Endothelial cell of umbilical vein (primary cell): ENCODE measurements at regions of chr2 and their contacts with region 1.

Region 1: GRCh38 chr2:27582695-27583389 is at the start of gene ZNF512:
- DNase-seq: peak; percentile 89
- H3K4me3 ChIP-seq: peak within 1 kb of the TSS; percentile 51 to 98 (median 94)
- H3K27ac ChIP-seq: peak within 1 kb of the TSS; percentile 77
- H3K4me1 ChIP-seq: peaks cover 24% of the 10 kb centered on the region
- H3K27me3 ChIP-seq: no peaks in the 10 kb centered on the region
- CTCF ChIP-seq: peak in 1 of 2 donors; percentile 7
- POLR2A ChIP-seq: peak; percentile 91
- total RNA-seq, gene ZNF512: 28.0 and 37.0 TPM in 2 replicates

Region 2: DNA sequence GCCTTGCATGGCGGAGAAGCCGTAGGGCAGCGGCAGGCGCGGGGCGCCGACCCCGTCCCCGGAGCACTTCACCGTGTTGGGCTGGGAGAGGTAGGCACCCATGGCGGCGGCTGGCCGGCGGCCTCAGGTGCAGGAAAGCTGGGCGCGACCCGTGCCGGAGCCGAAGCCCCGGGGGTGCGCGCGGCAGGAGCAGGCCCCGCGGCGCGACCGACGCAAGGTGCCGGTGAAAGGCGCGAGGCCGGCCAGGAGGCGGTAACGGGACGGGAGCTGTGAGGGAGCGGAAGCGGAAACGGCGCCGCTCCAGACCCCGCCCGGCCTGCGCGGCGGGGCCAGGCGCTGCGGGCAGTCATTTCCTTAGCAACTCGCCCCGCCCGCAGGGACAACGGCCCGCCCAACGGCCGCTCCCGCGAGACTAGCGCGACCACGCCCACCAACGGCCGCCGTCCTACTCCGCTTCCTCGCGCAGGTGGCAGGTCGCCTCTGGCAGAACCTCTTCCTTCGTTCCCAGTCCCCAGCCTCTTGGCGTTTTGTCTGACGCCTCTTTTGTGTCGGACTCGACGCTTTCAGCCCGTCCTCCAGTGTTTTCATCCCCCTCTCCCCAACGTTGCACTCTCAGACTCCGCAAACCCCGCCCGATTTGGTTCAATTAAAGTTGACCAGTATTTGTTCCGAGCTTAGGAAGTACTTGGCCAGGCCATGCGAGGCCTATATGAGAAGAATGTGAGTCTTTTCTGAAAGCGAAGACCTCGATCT is 173.3 kb before region 1 on chr2 and contains the start of gene PPM1G:
- CTCF ChIA-PET with region 1: no interaction called
- POLR2A ChIA-PET with region 1: no interaction called
- dilution Hi-C with region 1: no loop called
- intact Hi-C with region 1: loop called (anchors 5 kb)
- DNase-seq: peak; percentile 97
- H3K4me3 ChIP-seq: peak within 1 kb of the TSS; percentile 71 to 90 (median 84)
- H3K27ac ChIP-seq: peak within 1 kb of the TSS; percentile 73
- H3K4me1 ChIP-seq: peaks cover 20% of the 10 kb centered on the region
- H3K27me3 ChIP-seq: peaks cover 1 to 5% of the 10 kb centered on the region in 2 experiments
- CTCF ChIP-seq: no peak
- POLR2A ChIP-seq: peak; percentile 98
- total RNA-seq, gene PPM1G: 131 and 135 TPM in 2 replicates

Region 3: DNA sequence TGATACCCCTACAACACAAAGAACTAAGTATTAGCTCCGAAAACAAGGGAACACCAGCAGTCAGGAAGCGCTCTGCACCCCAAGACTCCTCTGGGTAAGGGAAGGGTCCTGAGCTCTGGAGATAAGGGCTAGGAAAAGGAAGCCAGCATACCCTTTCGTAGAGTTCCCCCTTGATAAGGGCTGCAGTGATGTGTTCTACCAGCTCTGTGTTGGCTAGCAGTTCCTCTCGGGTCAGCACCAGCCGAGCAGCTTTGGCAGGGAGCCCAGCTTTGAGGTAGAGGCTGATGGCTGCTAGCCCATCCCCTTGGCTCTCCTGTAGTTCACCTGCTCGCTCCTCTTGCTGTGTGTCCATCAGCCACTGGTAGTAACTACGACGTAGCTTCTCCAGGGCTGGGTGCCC is 121.7 kb before region 1 on chr2:
- CTCF ChIA-PET with region 1: no interaction called
- POLR2A ChIA-PET with region 1: no interaction called
- dilution Hi-C with region 1: loop called (anchors 25 kb)
- intact Hi-C with region 1: no loop called
- DNase-seq: no peak
- H3K4me3 ChIP-seq: no peak overlapping the region
- H3K27ac ChIP-seq: no peak overlapping the region
- H3K4me1 ChIP-seq: no peaks in the 10 kb centered on the region
- H3K27me3 ChIP-seq: no peaks in the 10 kb centered on the region
- CTCF ChIP-seq: no peak
- POLR2A ChIP-seq: no peak

Region 4: DNA sequence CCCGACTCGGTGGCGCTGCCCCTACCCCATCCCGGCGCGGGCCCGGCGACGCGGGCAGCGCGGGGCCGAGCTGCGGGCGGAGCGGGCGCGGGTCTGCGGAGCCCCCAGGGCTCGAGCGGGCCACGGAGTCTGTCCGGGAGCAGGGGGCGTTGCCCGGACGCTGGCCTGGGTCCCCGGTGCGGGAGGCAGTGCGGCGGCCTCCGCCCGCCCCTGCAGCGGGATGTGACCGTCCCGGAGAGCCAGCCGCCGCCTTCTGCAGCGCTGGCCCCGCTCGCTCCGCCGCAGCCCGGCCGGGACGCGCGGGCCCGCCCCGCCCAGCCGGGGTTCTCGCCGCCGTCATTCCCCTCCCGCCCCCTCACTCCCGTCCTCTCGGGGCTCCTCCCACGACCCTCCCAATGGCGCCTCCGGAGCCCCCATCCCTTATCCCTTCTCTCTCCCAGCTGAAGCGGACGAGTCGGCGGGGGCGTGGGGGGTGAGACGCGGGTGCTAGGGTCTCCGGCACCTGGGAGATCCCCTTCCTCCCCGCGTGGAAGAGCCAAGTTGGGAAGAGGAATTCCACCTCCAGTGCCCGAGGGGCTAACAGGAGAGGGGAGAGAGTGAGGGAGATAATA is 87.8 kb before region 1 on chr2 and contains the start of gene FNDC4:
- CTCF ChIA-PET with region 1: no interaction called
- POLR2A ChIA-PET with region 1: no interaction called
- dilution Hi-C with region 1: no loop called
- intact Hi-C with region 1: loop called (anchors 1 kb)
- DNase-seq: peak; percentile 37
- H3K4me3 ChIP-seq: peak within 1 kb of the TSS; percentile 78 to 89 (median 85)
- H3K27ac ChIP-seq: peak within 1 kb of the TSS; percentile 8
- H3K4me1 ChIP-seq: peaks cover 18% of the 10 kb centered on the region
- H3K27me3 ChIP-seq: no peaks in the 10 kb centered on the region
- CTCF ChIP-seq: no peak
- POLR2A ChIP-seq: peak; percentile 73
- total RNA-seq, gene FNDC4: 15.5 and 20.0 TPM in 2 replicates

Region 5: DNA sequence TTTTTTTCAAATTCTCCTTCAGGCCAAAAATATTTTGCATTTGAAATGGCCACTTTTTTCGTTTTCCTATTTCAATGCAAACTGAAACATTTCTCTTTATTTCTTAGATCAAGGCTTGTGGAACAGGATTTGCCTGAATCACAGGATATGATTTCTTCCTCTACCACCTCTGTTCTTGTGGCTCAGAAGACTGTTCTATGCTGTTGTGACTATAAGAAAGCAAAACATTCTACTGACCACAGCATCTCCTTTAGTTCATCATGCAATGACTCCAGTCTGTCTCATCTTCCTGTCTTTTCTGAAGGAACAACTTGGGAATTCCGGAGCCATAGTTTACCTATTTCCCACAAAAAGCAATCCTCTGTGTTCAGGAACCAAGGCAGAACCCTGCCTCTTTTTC is 16.2 kb before region 1 on chr2:
- CTCF ChIA-PET with region 1: no interaction called
- POLR2A ChIA-PET with region 1: no interaction called
- dilution Hi-C with region 1: no loop called
- intact Hi-C with region 1: loop called (anchors 1 kb)
- DNase-seq: peak; percentile 82
- H3K4me3 ChIP-seq: peak overlapping the region in 1 of 3 experiments; percentile 1
- H3K27ac ChIP-seq: peak overlapping the region; percentile 81
- H3K4me1 ChIP-seq: peaks cover 30% of the 10 kb centered on the region
- H3K27me3 ChIP-seq: no peaks in the 10 kb centered on the region
- CTCF ChIP-seq: no peak
- POLR2A ChIP-seq: no peak

Region 6: DNA sequence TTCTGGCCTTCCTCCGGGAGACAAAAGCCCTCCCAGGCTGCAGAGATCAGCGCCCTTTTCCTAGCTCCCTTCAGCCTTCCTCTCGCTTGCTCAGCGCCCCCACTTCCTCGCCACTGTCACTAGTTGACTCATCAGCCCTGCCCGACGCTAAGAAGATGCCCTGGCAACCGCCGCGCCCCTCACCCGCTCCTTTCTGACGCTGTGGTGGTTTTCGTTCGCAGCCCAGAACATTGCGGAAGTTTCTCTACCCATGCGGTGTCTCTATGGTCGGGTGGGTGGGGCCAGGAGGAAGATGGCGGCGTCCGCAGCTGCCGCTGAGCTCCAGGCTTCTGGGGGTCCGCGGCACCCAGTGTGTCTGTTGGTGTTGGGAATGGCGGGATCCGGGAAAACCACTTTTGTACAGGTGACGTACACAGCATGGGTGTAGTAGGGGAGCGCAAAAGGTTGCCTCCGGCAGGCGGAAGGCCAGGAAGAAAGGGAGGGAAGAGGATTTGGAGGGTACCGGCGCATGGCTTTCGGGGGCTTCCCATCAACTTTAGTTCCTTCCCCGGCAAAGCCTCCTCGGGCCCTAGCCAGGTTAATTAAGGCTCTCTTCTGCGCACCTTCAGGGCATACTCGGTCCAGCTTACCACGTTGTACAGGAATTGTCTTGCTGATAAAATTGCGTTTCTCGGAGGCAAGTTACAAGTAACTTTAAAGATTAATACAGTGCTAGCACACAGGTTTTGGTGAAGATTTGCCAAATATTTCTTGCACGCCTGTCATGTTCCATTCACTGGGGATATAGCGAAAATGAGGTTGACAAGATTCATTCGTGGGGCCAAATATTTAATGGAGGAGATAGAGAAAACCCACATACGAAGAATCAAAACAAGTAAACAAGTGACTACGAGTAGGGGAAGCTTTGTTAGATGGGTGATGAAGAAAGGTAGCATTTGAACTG is 46.2 kb after region 1 on chr2 and contains the starts of genes CCDC121 and GPN1:
- CTCF ChIA-PET with region 1: no interaction called
- POLR2A ChIA-PET with region 1: no interaction called
- dilution Hi-C with region 1: no loop called
- intact Hi-C with region 1: loop called (anchors 1 kb)
- DNase-seq: peak; percentile 93
- H3K4me3 ChIP-seq: peak within 1 kb of the TSS; percentile 98
- H3K27ac ChIP-seq: peak within 1 kb of the TSS; percentile 69
- H3K4me1 ChIP-seq: peaks cover 27% of the 10 kb centered on the region
- H3K27me3 ChIP-seq: no peaks in the 10 kb centered on the region
- CTCF ChIP-seq: no peak
- POLR2A ChIP-seq: peak; percentile 96
- total RNA-seq, gene CCDC121: 1.7 and 3.3 TPM in 2 replicates
- total RNA-seq, gene GPN1: 41.5 and 45.5 TPM in 2 replicates